ENCODE measurements at regions of chr19 and their contacts with region 1.

Region 1: DNA sequence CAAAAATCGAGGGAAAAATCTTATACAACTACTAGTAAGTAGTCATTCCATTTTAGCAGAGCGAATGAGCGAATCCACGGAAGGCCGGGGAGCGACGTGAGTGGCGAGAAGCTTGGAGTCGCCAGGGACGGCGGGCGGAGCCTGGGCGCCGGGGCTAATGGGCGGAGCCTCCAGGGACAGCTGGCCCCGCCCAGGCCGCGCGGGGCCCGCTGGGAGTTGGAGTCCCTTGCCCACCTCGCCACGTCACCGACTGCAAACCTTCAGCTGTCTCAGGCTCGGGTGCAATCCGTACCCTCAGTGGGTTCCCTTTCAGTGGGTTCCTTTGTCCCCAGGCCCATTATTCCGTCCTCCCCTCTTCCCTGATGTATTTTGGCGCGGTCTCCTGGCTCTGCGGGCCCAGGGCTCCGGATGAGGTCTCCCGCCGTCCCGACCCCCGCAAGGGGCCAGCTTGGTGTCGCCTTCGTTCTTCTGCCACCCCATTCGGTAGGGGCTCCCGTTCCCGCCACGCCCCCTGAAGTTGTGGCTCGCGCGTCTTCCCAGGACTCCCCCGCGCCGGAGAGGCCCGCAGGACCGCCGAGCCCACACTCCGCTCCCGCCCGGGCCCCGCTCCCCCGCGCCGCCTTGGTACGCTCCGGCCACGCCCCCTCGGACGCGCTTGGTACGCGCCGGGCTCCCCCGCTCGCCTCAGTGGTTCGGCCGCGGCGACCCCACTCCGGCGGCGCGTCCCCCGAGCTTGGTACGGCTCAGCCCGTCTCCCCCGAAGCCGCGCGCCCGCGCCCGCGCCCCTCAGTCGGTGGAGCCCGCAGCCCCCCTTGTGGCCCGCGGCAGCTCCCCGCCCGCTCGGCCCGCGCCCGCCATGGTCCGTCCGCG is at the start of gene PTOV1:
- DNase-seq: peak; percentile 96
- ATAC-seq: peak; percentile 96
- total RNA-seq, gene PTOV1: 122 TPM

Region 2: GRCh38 chr19:49817964-49818648 is 32.6 kb before region 1 on chr19 and contains the start of gene MED25:
- intact Hi-C with region 1: loop called (anchors 2 kb)
- DNase-seq: peak; percentile 95
- ATAC-seq: peak; percentile 73
- total RNA-seq, gene MED25: 70.4 TPM

Region 3: GRCh38 chr19:49832556-49832955 is 18.2 kb before region 1 on chr19:
- intact Hi-C with region 1: no loop called
- DNase-seq: no peak
- ATAC-seq: no peak

Region 4: GRCh38 chr19:49866933-49867782 is 16.4 kb after region 1 on chr19 and contains the start of gene PNKP:
- intact Hi-C with region 1: loop called (anchors 2 kb)
- DNase-seq: peak; percentile 96
- ATAC-seq: peak; percentile 64
- total RNA-seq, gene PNKP: 36.9 TPM

Measured in Right ventricle myocardium inferior (tissue), 1 donor.